CD8-positive, alpha-beta T cell (primary cell): ENCODE measurements at regions of chr16 and their contacts with region 1.

Region 1: GRCh38 chr16:10385725-10386516 is at the start of gene ATF7IP2:
- DNase-seq: peak; percentile 73 to 92 (median 89)
- ATAC-seq: peak; percentile 96
- H3K4me3 ChIP-seq: peak within 1 kb of the TSS; percentile 89 to 90
- H3K4me3 Mint-ChIP-seq: peak within 1 kb of the TSS; percentile 95
- H3K27ac ChIP-seq: peak within 1 kb of the TSS; percentile 72 to 73
- H3K27ac Mint-ChIP-seq: peak within 1 kb of the TSS; percentile 97
- H3K4me1 ChIP-seq: peaks cover 34% of the 10 kb centered on the region
- H3K4me1 Mint-ChIP-seq: peaks cover 52% of the 10 kb centered on the region
- H3K27me3 ChIP-seq: no peaks in the 10 kb centered on the region
- H3K27me3 Mint-ChIP-seq: no peaks in the 10 kb centered on the region
- CTCF ChIP-seq: no peak
- total RNA-seq, gene ATF7IP2: 88.1 to 98.0 TPM

Region 2: GRCh38 chr16:8674413-8675022 is 1711.4 kb before region 1 on chr16 and contains the start of gene ABAT:
- CTCF ChIA-PET with region 1: no interaction called
- POLR2A ChIA-PET with region 1: no interaction called
- intact Hi-C with region 1: loop called in 1 of 2 experiments (anchors 10 kb)
- DNase-seq: peak; percentile 74 to 93 (median 88)
- ATAC-seq: peak; percentile 96
- H3K4me3 ChIP-seq: peak within 1 kb of the TSS; percentile 58 to 75
- H3K4me3 Mint-ChIP-seq: peak within 1 kb of the TSS; percentile 89
- H3K27ac ChIP-seq: peak within 1 kb of the TSS in 1 of 2 experiments; percentile 37
- H3K27ac Mint-ChIP-seq: peak within 1 kb of the TSS; percentile 90
- H3K4me1 ChIP-seq: peaks cover 16% of the 10 kb centered on the region
- H3K4me1 Mint-ChIP-seq: peaks cover 19% of the 10 kb centered on the region
- H3K27me3 ChIP-seq: no peaks in the 10 kb centered on the region
- H3K27me3 Mint-ChIP-seq: no peaks in the 10 kb centered on the region
- CTCF ChIP-seq: no peak
- total RNA-seq, gene ABAT: 4.1 to 4.2 TPM

Region 3: DNA sequence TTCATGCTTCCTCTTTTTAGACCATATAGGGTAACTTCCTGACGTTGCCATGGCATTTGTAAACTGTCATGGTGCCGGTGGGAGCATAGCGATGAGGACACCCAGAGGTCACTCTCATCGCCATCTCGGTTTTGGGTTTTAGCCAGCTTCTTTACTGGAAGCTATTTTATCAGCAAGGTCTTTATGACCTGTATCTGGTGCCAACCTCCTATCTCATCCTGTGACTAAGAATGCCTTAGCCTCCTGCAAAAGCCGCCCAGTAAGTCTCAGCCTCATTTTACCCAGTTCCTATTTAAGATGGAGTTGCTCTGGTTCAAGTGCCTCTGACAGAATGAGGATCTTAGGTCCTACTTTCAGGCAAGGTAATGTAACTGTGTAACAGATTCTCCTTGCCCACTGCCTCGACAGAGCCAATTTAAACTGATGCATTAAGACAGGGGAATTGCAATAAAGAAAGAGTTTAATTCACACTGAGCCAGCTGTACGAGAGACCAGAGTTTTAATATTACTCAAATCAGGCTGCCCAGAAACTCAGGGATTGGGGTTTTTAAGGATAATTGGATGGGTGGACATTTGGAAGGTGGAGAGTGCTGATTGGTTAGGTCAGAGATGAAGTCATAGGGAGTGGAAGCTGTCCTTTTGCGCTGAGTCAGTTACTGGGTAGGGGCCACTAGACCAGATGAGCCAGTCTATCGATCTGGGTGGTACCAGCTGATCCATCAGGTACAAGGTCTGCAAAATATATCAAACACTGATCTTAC is 60.0 kb before region 1 on chr16:
- CTCF ChIA-PET with region 1: interaction called, 4 read pairs
- POLR2A ChIA-PET with region 1: interaction called, 3 read pairs
- intact Hi-C with region 1: loop called (anchors 5 kb)
- DNase-seq: no peak
- ATAC-seq: no peak
- H3K4me3 ChIP-seq: no peak overlapping the region
- H3K4me3 Mint-ChIP-seq: no peak overlapping the region
- H3K27ac ChIP-seq: no peak overlapping the region
- H3K27ac Mint-ChIP-seq: peak overlapping the region; percentile 6
- H3K4me1 ChIP-seq: peaks cover 13% of the 10 kb centered on the region
- H3K4me1 Mint-ChIP-seq: peaks cover 22% of the 10 kb centered on the region
- H3K27me3 ChIP-seq: no peaks in the 10 kb centered on the region
- H3K27me3 Mint-ChIP-seq: no peaks in the 10 kb centered on the region
- CTCF ChIP-seq: no peak

Region 4: GRCh38 chr16:10362077-10362863 is 23.7 kb before region 1 on chr16:
- CTCF ChIA-PET with region 1: no interaction called
- POLR2A ChIA-PET with region 1: interaction called, 15 read pairs
- intact Hi-C with region 1: no loop called
- DNase-seq: peak in 1 of 9 experiments; percentile 17
- ATAC-seq: peak; percentile 29
- H3K4me3 ChIP-seq: peak overlapping the region in 1 of 2 experiments; percentile 8
- H3K4me3 Mint-ChIP-seq: peak overlapping the region; percentile 44
- H3K27ac ChIP-seq: no peak overlapping the region
- H3K27ac Mint-ChIP-seq: peak overlapping the region; percentile 82
- H3K4me1 ChIP-seq: peaks cover 19% of the 10 kb centered on the region
- H3K4me1 Mint-ChIP-seq: peaks cover 18% of the 10 kb centered on the region
- H3K27me3 ChIP-seq: no peaks in the 10 kb centered on the region
- H3K27me3 Mint-ChIP-seq: no peaks in the 10 kb centered on the region
- CTCF ChIP-seq: no peak

Region 5: DNA sequence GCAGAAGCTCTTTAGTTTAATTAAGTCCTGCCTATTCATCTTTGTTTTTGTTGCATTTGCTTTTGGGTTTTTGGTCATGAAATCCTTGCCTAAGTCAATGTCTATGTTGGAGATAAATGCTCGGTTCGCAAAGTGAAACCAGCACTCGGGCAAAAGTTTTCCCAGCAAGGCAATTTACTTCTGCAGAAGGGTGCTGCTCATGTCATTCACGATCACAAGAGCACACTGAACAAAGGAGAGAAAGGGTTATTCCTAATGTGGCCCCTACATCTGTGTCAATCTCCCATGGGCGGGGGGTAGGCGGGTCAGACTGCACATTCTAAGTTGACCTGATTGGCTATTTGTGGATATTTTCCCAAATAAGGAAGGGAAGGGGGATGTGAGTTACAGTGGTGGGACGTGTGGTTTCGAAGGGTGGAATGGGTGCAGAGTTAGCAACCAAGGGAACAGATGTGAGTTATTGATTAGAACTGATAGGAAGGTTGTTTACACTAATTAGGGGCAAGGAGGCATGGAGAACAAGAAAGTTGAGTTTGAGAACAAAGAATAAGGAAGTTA is 23.0 kb after region 1 on chr16:
- CTCF ChIA-PET with region 1: no interaction called
- POLR2A ChIA-PET with region 1: no interaction called
- intact Hi-C with region 1: loop called in 1 of 2 experiments (anchors 1 kb)
- DNase-seq: no peak
- ATAC-seq: no peak
- H3K4me3 ChIP-seq: no peak overlapping the region
- H3K4me3 Mint-ChIP-seq: no peak overlapping the region
- H3K27ac ChIP-seq: no peak overlapping the region
- H3K27ac Mint-ChIP-seq: peak overlapping the region; percentile 66
- H3K4me1 ChIP-seq: no peaks in the 10 kb centered on the region
- H3K4me1 Mint-ChIP-seq: peaks cover 11% of the 10 kb centered on the region
- H3K27me3 ChIP-seq: no peaks in the 10 kb centered on the region
- H3K27me3 Mint-ChIP-seq: no peaks in the 10 kb centered on the region
- CTCF ChIP-seq: no peak

Region 6: GRCh38 chr16:10937068-10937859 is 551.3 kb after region 1 on chr16:
- CTCF ChIA-PET with region 1: no interaction called
- POLR2A ChIA-PET with region 1: no interaction called
- intact Hi-C with region 1: loop called in 1 of 2 experiments (anchors 10 kb)
- DNase-seq: peak in 2 of 9 experiments; percentile 34 to 35
- ATAC-seq: no peak
- H3K4me3 ChIP-seq: peak overlapping the region; percentile 12 to 14
- H3K4me3 Mint-ChIP-seq: peak overlapping the region; percentile 93
- H3K27ac ChIP-seq: no peak overlapping the region
- H3K27ac Mint-ChIP-seq: peak overlapping the region; percentile 60
- H3K4me1 ChIP-seq: peaks cover 69% of the 10 kb centered on the region
- H3K4me1 Mint-ChIP-seq: peaks cover 82% of the 10 kb centered on the region
- H3K27me3 ChIP-seq: no peaks in the 10 kb centered on the region
- H3K27me3 Mint-ChIP-seq: no peaks in the 10 kb centered on the region
- CTCF ChIP-seq: no peak